MCF 10A (cell line): ENCODE measurements at regions of chr13 and their contacts with region 1.

Region 1: GRCh38 chr13:47499358-47500150 is 501.5 kb downstream of the SUCLA2 start:
- DNase-seq: peak; percentile 82
- H3K4me3 Mint-ChIP-seq: peak overlapping the region; percentile 42
- H3K27ac Mint-ChIP-seq: peak overlapping the region; percentile 82
- H3K4me1 Mint-ChIP-seq: peaks cover 44% of the 10 kb centered on the region
- H3K27me3 Mint-ChIP-seq: no peaks in the 10 kb centered on the region
- CTCF ChIP-seq: no peak

Region 2: GRCh38 chr13:47426126-47426849 is 73.3 kb before region 1 on chr13:
- CTCF ChIA-PET with region 1: interaction called, 4 read pairs
- POLR2A ChIA-PET with region 1: interaction called, 10 read pairs
- intact Hi-C with region 1: no loop called
- DNase-seq: peak; percentile 85
- H3K4me3 Mint-ChIP-seq: no peak overlapping the region
- H3K27ac Mint-ChIP-seq: no peak overlapping the region
- H3K4me1 Mint-ChIP-seq: no peaks in the 10 kb centered on the region
- H3K27me3 Mint-ChIP-seq: no peaks in the 10 kb centered on the region
- CTCF ChIP-seq: no peak

Region 3: DNA sequence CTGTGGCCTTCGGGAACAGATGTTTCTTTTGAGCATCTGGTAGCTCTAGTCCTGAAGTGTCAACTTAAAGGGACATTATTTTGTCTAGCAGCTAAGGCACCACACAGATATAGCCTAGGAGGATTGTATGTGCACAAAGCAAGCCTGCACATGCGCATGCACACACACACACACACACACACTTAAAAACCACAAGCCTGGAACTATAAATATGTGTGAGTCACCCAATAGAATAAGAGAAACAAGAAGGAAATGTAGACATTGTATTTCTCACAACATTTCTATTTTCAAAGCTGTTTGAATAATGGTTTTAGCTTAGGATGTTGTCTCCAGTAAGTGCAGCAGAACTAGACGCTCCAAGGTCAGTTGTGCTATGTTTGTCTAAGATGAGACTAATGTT is 15.0 kb before region 1 on chr13:
- CTCF ChIA-PET with region 1: interaction called, 4 read pairs
- POLR2A ChIA-PET with region 1: interaction called, 20 read pairs
- intact Hi-C with region 1: loop called (anchors 2 kb)
- DNase-seq: peak; percentile 61
- H3K4me3 Mint-ChIP-seq: no peak overlapping the region
- H3K27ac Mint-ChIP-seq: peak overlapping the region; percentile 42
- H3K4me1 Mint-ChIP-seq: peaks cover 34% of the 10 kb centered on the region
- H3K27me3 Mint-ChIP-seq: no peaks in the 10 kb centered on the region
- CTCF ChIP-seq: no peak